Caco-2 (cell line): ENCODE measurements at regions of chr2 and their contacts with region 1.

Region 1: DNA sequence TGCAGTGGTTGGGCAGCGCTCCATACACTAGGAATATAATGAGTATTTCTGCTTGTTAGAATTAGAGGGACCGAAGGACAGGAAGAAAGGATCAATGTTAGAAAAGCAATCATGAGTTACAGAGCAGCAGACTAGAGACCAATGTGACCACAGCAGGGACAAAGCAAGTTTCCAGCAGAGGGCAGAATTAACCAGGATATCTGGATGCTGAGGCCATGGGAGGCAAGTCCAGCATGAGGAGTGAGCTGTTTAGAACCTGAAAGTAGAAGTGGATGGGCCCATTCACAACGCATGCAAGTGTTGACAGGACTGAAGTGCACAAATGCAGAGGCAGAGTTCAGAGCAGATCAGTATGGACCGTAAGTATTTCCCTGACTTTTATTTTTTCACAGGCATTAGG is 910.4 kb upstream of the GYPC start:
- DNase-seq: peak; percentile 57 to 71
- H3K4me3 ChIP-seq: no peak overlapping the region
- H3K4me3 Mint-ChIP-seq: no peak overlapping the region
- H3K27ac Mint-ChIP-seq: no peak overlapping the region
- H3K4me1 ChIP-seq: no peaks in the 10 kb centered on the region
- H3K4me1 Mint-ChIP-seq: no peaks in the 10 kb centered on the region
- H3K27me3 ChIP-seq: no peaks in the 10 kb centered on the region
- H3K27me3 Mint-ChIP-seq: no peaks in the 10 kb centered on the region
- CTCF ChIP-seq: peak; percentile 40 to 62

Region 2: DNA sequence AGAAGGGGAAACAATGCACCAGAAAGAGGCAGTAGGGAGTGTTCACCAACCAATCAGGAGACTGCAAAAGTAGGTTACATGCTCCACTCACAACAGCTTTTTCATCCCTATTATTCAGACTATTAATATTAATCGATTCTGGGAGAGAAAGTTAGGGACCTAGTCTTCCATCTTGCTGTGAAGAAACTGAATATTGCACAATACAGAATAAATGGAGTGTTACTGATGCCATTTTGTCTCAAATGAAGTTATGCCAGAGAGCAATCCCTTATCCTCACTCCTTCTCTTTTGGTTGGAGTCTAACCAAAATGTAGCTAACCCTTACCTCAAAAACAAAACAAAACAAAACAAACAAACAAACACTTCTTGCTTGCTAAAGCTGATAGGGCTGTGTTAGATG is 210.4 kb before region 1 on chr2:
- CTCF ChIA-PET with region 1: no interaction called
- POLR2A ChIA-PET with region 1: no interaction called
- intact Hi-C with region 1: no loop called
- DNase-seq: no peak
- H3K4me3 ChIP-seq: no peak overlapping the region
- H3K4me3 Mint-ChIP-seq: no peak overlapping the region
- H3K27ac Mint-ChIP-seq: no peak overlapping the region
- H3K4me1 ChIP-seq: no peaks in the 10 kb centered on the region
- H3K4me1 Mint-ChIP-seq: no peaks in the 10 kb centered on the region
- H3K27me3 ChIP-seq: no peaks in the 10 kb centered on the region
- H3K27me3 Mint-ChIP-seq: peaks cover 6% of the 10 kb centered on the region
- CTCF ChIP-seq: no peak

Region 3: DNA sequence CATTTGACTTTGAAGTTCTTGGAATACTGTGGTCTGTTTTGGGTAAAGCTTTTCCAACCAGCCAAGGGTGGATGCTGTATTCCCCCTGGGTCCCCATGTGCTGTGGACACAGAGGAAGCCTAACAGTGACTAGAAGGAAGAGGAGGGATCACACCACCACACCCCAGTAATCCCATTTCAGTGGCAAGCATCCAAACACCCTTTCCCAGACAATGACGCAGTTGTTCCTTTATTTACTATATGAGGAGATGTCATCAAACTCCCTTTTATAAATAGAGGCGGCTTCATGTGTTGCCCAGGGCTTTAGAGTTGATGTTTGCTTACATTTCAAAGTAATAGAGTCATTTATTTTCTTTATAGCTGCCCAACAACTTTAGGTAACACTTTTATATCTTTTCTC is 49.0 kb before region 1 on chr2:
- CTCF ChIA-PET with region 1: no interaction called
- POLR2A ChIA-PET with region 1: no interaction called
- intact Hi-C with region 1: no loop called
- DNase-seq: no peak
- H3K4me3 ChIP-seq: no peak overlapping the region
- H3K4me3 Mint-ChIP-seq: no peak overlapping the region
- H3K27ac Mint-ChIP-seq: no peak overlapping the region
- H3K4me1 ChIP-seq: no peaks in the 10 kb centered on the region
- H3K4me1 Mint-ChIP-seq: no peaks in the 10 kb centered on the region
- H3K27me3 ChIP-seq: no peaks in the 10 kb centered on the region
- H3K27me3 Mint-ChIP-seq: no peaks in the 10 kb centered on the region
- CTCF ChIP-seq: no peak

Region 4: DNA sequence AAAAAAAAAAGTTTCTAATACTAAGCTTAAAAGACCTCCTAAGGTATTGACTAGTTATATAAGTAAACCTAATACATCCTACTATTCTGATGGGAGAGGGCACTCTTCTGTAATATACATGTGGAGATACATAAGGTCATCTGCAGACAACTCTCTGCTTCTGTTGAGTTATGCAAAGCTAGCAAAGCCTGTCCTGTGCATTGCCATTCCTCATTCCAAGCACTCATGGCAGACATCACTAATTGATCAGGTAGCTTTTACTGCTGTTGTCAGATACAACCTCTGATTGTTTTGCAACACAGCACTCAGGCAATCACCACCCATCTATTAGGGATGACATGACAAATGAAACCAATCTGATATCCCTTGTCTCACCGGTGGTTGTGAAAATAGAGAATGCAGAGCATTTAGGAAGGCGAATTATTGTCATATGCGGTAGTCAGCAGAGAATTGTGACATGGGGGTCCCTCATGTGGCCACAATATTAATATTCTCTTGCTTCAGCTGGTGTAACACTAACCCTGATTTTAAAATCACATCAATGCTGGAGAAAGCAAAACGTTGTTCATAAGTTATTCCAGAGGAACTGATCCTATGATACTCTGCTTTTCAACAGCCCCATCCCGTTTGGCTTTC is 493.9 kb after region 1 on chr2:
- CTCF ChIA-PET with region 1: no interaction called
- POLR2A ChIA-PET with region 1: no interaction called
- intact Hi-C with region 1: loop called (anchors 2 kb)
- DNase-seq: no peak
- H3K4me3 ChIP-seq: no peak overlapping the region
- H3K4me3 Mint-ChIP-seq: no peak overlapping the region
- H3K27ac Mint-ChIP-seq: no peak overlapping the region
- H3K4me1 ChIP-seq: no peaks in the 10 kb centered on the region
- H3K4me1 Mint-ChIP-seq: no peaks in the 10 kb centered on the region
- H3K27me3 ChIP-seq: no peaks in the 10 kb centered on the region
- H3K27me3 Mint-ChIP-seq: no peaks in the 10 kb centered on the region
- CTCF ChIP-seq: no peak

Region 5: DNA sequence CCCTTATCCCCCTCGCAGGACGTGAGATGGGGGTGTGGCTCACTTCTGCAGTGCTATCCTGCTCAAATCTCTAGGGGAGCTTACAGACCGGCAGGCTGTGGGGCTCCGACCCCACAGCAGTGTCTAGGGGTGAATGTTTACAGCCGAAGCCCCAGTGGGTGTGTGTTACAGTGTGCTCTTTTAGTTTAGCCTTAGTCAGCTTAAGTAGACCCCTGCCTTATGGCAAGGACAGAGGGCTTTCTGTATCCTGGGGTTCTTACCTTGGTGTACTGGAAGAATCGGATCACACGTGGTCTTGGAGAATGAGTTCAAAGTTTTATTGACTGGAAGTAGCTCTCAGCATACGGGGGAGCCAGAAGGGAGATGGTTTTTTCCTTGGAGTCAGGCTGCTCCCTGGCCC is 562.2 kb after region 1 on chr2:
- CTCF ChIA-PET with region 1: no interaction called
- POLR2A ChIA-PET with region 1: no interaction called
- intact Hi-C with region 1: loop called (anchors 1 kb)
- DNase-seq: peak in 1 of 2 experiments; percentile 5
- H3K4me3 ChIP-seq: peak overlapping the region; percentile 43
- H3K4me3 Mint-ChIP-seq: peak overlapping the region; percentile 84
- H3K27ac Mint-ChIP-seq: peak overlapping the region; percentile 79
- H3K4me1 ChIP-seq: 0 out of 2 replicates have a peak, but pooled peaks cover 4% of the 10 kb centered on the region
- H3K4me1 Mint-ChIP-seq: peaks cover 5% of the 10 kb centered on the region
- H3K27me3 ChIP-seq: no peaks in the 10 kb centered on the region
- H3K27me3 Mint-ChIP-seq: no peaks in the 10 kb centered on the region
- CTCF ChIP-seq: no peak

Region 6: GRCh38 chr2:126482582-126483464 is 737.3 kb after region 1 on chr2:
- CTCF ChIA-PET with region 1: interaction called, 3 read pairs
- POLR2A ChIA-PET with region 1: no interaction called
- intact Hi-C with region 1: loop called (anchors 2 kb)
- DNase-seq: peak in 1 of 2 experiments; percentile 21
- H3K4me3 ChIP-seq: no peak overlapping the region
- H3K4me3 Mint-ChIP-seq: no peak overlapping the region
- H3K27ac Mint-ChIP-seq: no peak overlapping the region
- H3K4me1 ChIP-seq: no peaks in the 10 kb centered on the region
- H3K4me1 Mint-ChIP-seq: no peaks in the 10 kb centered on the region
- H3K27me3 ChIP-seq: no peaks in the 10 kb centered on the region
- H3K27me3 Mint-ChIP-seq: peaks cover 6% of the 10 kb centered on the region
- CTCF ChIP-seq: peak in 1 of 2 experiments; percentile 33

Region 7: DNA sequence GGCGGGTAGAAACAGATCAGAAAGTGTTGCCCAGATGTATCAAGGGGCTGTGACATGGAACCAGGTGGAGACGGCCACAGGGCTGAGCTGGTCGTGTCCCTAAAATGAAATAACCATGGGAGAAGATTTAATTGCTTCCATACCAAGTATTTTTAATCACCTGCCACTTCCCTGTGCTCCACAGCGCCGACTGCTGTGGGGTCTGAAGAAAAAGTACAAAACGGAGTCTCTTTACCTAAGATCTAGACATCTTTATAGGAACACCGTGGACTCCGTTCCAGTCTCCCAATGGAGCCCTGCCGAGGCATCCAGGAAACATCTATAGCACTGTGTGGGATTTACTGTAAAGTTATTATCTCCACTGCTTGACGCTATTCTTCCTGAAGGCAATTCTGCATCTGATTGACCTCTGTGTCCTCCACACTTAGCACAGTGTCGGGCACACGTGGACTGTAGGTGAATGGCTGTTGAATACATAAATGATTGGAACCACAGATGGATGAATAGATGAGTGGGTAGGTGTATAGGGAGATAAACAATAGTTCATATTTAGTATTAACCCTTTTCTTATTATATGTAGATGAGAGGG is 888.9 kb after region 1 on chr2:
- CTCF ChIA-PET with region 1: no interaction called
- POLR2A ChIA-PET with region 1: no interaction called
- intact Hi-C with region 1: loop called (anchors 1 kb)
- DNase-seq: peak in 1 of 2 experiments; percentile 49
- H3K4me3 ChIP-seq: no peak overlapping the region
- H3K4me3 Mint-ChIP-seq: no peak overlapping the region
- H3K27ac Mint-ChIP-seq: no peak overlapping the region
- H3K4me1 ChIP-seq: no peaks in the 10 kb centered on the region
- H3K4me1 Mint-ChIP-seq: no peaks in the 10 kb centered on the region
- H3K27me3 ChIP-seq: no peaks in the 10 kb centered on the region
- H3K27me3 Mint-ChIP-seq: peaks cover 14% of the 10 kb centered on the region
- CTCF ChIP-seq: peak; percentile 78 to 87